ENCODE measurements at regions of chr12 and their contacts with region 1.

Region 1: DNA sequence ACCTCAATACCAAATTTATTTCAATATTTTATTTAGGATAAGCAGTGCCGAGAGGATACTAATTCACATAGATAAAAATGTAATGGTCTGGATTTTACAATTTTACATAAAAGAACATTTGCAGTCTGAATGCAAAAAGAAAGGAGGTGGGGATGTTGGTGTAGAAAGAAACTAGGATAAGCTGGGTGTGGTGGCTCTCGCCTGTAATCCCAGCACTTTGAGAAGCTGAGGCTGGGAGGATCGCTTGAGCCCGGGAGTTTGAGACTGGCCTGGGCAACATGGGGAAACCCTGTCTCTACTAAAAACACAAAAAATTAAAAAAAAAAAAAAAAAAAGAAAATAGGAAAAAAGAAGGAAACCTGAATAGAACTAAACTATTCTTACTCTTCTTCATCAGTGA is 16.9 kb downstream of the SYCP3 start:
- DNase-seq: no peak
- ATAC-seq: no peak
- H3K4me3 ChIP-seq: no peak overlapping the region
- H3K4me3 Mint-ChIP-seq: no peak overlapping the region
- H3K27ac ChIP-seq: no peak overlapping the region
- H3K27ac Mint-ChIP-seq: no peak overlapping the region
- H3K4me1 ChIP-seq: no peaks in the 10 kb centered on the region
- H3K4me1 Mint-ChIP-seq: no peaks in the 10 kb centered on the region
- H3K27me3 ChIP-seq: no peaks in the 10 kb centered on the region
- H3K27me3 Mint-ChIP-seq: no peaks in the 10 kb centered on the region
- CTCF ChIP-seq: no peak

Region 2: GRCh38 chr12:101707131-101707782 is 15.1 kb before region 1 on chr12:
- CTCF ChIA-PET with region 1: no interaction called
- POLR2A ChIA-PET with region 1: no interaction called
- intact Hi-C with region 1: loop called in 1 of 2 experiments (anchors 2 kb)
- DNase-seq: no peak
- ATAC-seq: no peak
- H3K4me3 ChIP-seq: no peak overlapping the region
- H3K4me3 Mint-ChIP-seq: no peak overlapping the region
- H3K27ac ChIP-seq: no peak overlapping the region
- H3K27ac Mint-ChIP-seq: no peak overlapping the region
- H3K4me1 ChIP-seq: peaks cover 5% of the 10 kb centered on the region
- H3K4me1 Mint-ChIP-seq: peaks cover 13% of the 10 kb centered on the region
- H3K27me3 ChIP-seq: no peaks in the 10 kb centered on the region
- H3K27me3 Mint-ChIP-seq: no peaks in the 10 kb centered on the region
- CTCF ChIP-seq: no peak